Activated T-helper 1 cell treated with anti-CD3 and anti-CD28 coated beads, Interleukin-12 subunit alpha, Interleukin-12 subunit beta, Interleukin-2, Interleukin-4 antibody, amounts not matched to agents 30 ng/mL and 10 ng/mL and 1 ng/mL, durations not matched to agents 14 hours and 24 hours and 36 hours (primary cell): ENCODE measurements at regions of chr7 and their contacts with region 1.

Region 1: DNA sequence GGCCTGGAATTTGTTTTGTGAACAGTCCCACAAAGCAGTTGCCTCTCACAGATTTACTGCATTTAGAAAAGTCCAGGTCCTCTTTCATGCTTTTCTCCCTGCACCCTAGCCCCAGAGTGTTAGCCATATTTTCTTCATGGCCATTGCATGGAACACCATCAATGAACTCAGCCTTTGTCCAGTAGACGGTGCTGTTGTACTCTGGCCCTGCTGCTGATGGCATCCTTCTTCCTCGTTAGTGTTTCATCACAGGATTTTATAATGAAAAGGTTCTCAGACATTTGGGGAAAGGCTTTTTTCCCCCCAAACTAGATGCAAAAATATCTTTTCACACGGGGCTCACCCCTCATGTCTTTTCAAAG is 93.0 kb upstream of the SLC25A13 start:
- DNase-seq: peak; percentile 30
- H3K4me3 Mint-ChIP-seq: no peak overlapping the region
- H3K27ac Mint-ChIP-seq: no peak overlapping the region
- H3K4me1 Mint-ChIP-seq: no peaks in the 10 kb centered on the region
- H3K27me3 Mint-ChIP-seq: peaks cover 10% of the 10 kb centered on the region

Region 2: DNA sequence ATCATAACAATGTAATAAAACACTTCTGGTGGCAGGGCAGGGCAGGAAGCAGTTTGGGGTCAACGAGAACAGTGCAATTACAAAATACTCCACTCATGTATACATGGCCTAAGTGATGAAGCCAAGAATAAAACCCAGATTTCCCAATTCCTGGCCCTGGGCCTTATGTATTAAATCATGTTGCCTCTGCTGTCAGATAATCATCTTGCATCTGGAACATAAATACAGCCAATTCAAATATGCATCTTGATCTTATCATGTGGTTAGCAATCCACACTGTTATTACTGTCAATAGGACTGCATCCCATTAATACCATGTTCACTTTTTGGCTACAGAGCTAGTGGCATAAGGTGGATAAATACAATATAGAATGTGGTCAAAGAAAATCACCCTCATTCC is 93.5 kb after region 1 on chr7:
- intact Hi-C with region 1: no loop called
- DNase-seq: no peak
- H3K4me3 Mint-ChIP-seq: no peak overlapping the region
- H3K27ac Mint-ChIP-seq: no peak overlapping the region
- H3K4me1 Mint-ChIP-seq: no peaks in the 10 kb centered on the region
- H3K27me3 Mint-ChIP-seq: peaks cover 19% of the 10 kb centered on the region

Region 3: DNA sequence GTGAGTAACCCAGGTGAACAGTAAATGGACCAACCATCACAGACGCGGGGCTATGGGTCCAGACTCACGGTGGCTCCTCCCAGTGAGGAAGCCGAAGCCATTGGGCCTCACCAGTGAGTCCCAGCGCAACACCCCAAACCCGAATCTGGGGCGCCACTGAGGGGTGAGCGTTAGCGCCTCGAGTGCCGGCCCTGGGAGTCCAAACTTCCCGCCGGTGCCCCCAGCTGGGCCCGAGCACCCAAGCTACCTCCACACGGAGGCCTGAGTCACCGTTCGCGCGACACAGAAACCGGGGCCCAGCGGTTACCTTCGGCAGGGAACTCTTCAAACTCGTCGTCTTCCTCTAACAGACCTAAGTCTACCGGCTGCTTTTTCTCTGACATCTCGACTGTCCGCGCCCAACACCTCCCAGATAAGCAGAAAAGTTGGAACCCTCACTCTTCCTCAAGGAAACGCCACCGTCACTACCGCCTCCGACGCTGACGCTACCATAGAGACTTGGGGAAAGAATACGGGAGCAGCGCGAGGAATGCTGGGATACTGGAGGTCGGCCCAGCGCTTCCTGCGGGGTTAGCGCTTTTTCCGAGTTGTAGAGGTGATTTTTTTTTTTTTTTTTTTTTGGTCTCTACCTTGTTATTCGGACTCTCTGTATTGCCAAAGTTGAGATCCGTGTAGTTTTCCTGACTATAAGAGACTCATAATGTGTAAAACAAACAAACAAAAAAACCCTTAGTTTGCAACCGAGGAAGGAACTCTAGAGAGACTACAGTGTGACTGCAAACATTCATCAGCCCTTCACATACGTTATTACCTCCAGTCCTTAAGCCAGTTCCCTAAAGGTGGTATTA is 294.7 kb after region 1 on chr7 and contains the start of gene SEM1:
- intact Hi-C with region 1: loop called (anchors 5 kb)
- DNase-seq: peak; percentile 53
- H3K4me3 Mint-ChIP-seq: peak within 1 kb of the TSS; percentile 99
- H3K27ac Mint-ChIP-seq: peak within 1 kb of the TSS; percentile 98
- H3K4me1 Mint-ChIP-seq: peaks cover 14% of the 10 kb centered on the region
- H3K27me3 Mint-ChIP-seq: no peaks in the 10 kb centered on the region
- total RNA-seq, gene SEM1: 41.2 and 42.8 TPM in 2 replicates